ENCODE measurements at regions of chr18 and their contacts with region 1.

Region 1: GRCh38 chr18:59639821-59640220 is 57.4 kb downstream of the CCBE1 start:
- DNase-seq: no peak
- ATAC-seq: no peak
- H3K4me3 ChIP-seq: no peak overlapping the region
- H3K27ac ChIP-seq: no peak overlapping the region
- H3K4me1 ChIP-seq: no peaks in the 10 kb centered on the region
- H3K27me3 ChIP-seq: no peaks in the 10 kb centered on the region
- CTCF ChIP-seq: no peak

Region 2: DNA sequence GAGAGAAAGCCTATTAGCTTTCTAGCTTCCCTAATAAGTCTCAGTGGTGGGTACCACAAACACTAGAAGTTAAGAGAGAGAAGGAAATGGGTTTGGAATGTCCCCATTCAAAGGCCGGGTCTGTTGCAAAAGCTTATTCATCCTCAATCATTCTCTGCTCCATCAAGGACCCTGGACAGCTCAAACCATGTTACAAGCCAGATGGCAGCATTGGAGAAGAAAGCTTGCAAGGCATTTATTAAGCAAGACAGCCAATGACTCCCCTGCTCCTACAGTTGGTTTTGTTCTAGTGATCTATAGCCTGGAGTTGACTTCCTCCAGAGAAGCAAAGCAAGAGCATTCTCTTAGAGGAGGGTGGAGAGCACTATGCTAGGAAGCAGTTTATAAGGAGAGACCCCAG is 193.8 kb before region 1 on chr18:
- intact Hi-C with region 1: loop called (anchors 5 kb)
- DNase-seq: no peak
- ATAC-seq: no peak
- H3K4me3 ChIP-seq: no peak overlapping the region
- H3K27ac ChIP-seq: no peak overlapping the region
- H3K4me1 ChIP-seq: no peaks in the 10 kb centered on the region
- H3K27me3 ChIP-seq: no peaks in the 10 kb centered on the region
- CTCF ChIP-seq: no peak

Region 3: DNA sequence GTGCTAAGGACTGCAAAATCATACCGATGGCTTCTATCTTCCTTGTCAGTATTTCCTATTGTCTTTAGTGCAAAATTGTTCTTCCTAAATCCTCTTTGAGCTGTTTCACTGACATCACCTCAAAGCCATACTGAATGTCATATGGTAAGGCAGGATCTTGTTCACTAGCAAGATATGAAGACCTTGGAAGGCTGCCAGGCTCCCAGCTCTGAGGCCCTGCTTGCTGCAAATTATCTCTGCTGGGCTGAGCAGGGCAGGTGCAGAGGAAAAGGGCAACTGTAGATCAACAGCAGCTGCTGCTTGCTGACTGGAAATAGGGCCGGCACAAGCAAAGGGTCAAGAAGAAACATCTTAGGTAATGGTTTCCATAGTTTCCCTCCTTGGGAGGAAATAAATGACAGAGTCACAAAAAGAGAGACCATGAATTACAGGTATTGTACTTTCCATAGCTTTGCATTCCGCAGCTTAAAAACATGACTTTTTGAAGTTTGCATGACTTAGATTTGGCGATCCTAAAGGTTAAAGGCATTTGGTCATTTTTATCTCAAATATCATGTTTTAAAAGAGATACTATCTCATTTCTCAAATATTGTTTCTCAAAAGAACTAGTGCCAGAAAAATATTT is 318.3 kb after region 1 on chr18:
- intact Hi-C with region 1: no loop called
- DNase-seq: no peak
- ATAC-seq: no peak
- H3K4me3 ChIP-seq: no peak overlapping the region
- H3K27ac ChIP-seq: no peak overlapping the region
- H3K4me1 ChIP-seq: no peaks in the 10 kb centered on the region
- H3K27me3 ChIP-seq: no peaks in the 10 kb centered on the region
- CTCF ChIP-seq: no peak